Activated B cell treated with CpG ODN at 0.5 μM for 24 hours (primary cell): ENCODE measurements at regions of chr4 and their contacts with region 1.

Region 1: GRCh38 chr4:16026160-16026761 is 57.6 kb downstream of the PROM1 start:
- DNase-seq: no peak
- ATAC-seq: no peak
- H3K4me3 Mint-ChIP-seq: no peak overlapping the region
- H3K27ac Mint-ChIP-seq: no peak overlapping the region
- H3K4me1 Mint-ChIP-seq: no peaks in the 10 kb centered on the region
- H3K27me3 Mint-ChIP-seq: peaks cover 6% of the 10 kb centered on the region
- CTCF ChIP-seq: peak; percentile 37

Region 2: GRCh38 chr4:16196478-16197393 is 170.5 kb after region 1 on chr4:
- CTCF ChIA-PET with region 1: no interaction called
- POLR2A ChIA-PET with region 1: no interaction called
- intact Hi-C with region 1: loop called (anchors 1 kb)
- DNase-seq: no peak
- ATAC-seq: peak; percentile 86
- H3K4me3 Mint-ChIP-seq: peak overlapping the region; percentile 66
- H3K27ac Mint-ChIP-seq: peak overlapping the region; percentile 73
- H3K4me1 Mint-ChIP-seq: peaks cover 25% of the 10 kb centered on the region
- H3K27me3 Mint-ChIP-seq: no peaks in the 10 kb centered on the region
- CTCF ChIP-seq: no peak

Region 3: DNA sequence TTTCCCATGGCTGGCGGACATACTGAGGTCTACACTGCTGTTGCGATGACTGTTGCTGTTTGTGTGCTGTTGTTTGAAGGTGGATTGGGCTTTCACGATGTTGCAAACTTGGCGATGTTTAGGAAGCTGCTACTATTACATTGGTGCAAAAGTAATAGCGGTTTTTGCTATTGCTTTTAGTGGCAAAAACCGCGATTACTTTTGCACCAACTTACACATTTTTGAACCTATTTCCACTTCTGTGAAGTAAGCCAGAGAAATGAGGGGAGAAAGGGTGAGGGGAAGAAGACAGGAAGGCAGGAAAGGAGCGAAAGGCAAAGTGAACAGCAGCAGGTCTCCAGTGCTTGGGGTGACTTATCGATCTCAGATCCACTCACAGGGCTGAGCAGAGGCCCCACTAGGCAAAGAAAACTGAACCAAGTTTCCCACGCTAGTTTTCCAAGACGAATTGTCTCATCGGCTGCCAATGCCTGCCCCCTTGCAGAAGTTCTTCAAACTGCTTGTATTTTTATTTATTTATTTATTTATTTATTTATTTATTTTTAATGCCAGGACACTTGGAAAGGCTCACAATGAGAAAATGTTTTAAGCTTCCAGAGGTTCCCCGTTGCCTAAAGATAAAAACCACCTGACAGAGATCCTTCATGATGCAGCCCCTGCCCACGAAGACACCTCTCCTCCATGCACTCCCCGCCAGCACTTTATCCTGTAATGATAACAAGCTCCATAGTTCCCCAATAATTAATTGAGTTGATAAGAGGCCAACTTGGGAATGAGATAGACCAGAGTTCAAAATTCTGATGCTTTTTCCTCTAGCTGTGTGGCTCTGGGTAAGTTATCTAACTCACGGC is 1442.3 kb after region 1 on chr4:
- CTCF ChIA-PET with region 1: no interaction called
- POLR2A ChIA-PET with region 1: no interaction called
- intact Hi-C with region 1: loop called (anchors 1 kb)
- DNase-seq: no peak
- ATAC-seq: no peak
- H3K4me3 Mint-ChIP-seq: no peak overlapping the region
- H3K27ac Mint-ChIP-seq: no peak overlapping the region
- H3K4me1 Mint-ChIP-seq: peaks cover 2% of the 10 kb centered on the region
- H3K27me3 Mint-ChIP-seq: no peaks in the 10 kb centered on the region
- CTCF ChIP-seq: no peak